ENCODE measurements at regions of chr19 and their contacts with region 1.

Region 1: GRCh38 chr19:42244347-42245220 is 2.2 kb upstream of the GSK3A start:
- DNase-seq: peak; percentile 95
- H3K4me3 Mint-ChIP-seq: peak overlapping the region; percentile 83
- H3K27ac Mint-ChIP-seq: peak overlapping the region; percentile 90
- H3K4me1 Mint-ChIP-seq: peaks cover 49% of the 10 kb centered on the region
- H3K27me3 Mint-ChIP-seq: no peaks in the 10 kb centered on the region

Region 2: GRCh38 chr19:42132851-42133528 is 111.6 kb before region 1 on chr19:
- CTCF ChIA-PET with region 1: interaction called, 39 read pairs
- POLR2A ChIA-PET with region 1: interaction called, 20 read pairs
- DNase-seq: peak; percentile 85
- H3K4me3 Mint-ChIP-seq: peak overlapping the region; percentile 82
- H3K27ac Mint-ChIP-seq: peak overlapping the region; percentile 81
- H3K4me1 Mint-ChIP-seq: peaks cover 64% of the 10 kb centered on the region
- H3K27me3 Mint-ChIP-seq: no peaks in the 10 kb centered on the region

Region 3: GRCh38 chr19:42191855-42192254 is 52.7 kb before region 1 on chr19:
- CTCF ChIA-PET with region 1: no interaction called
- POLR2A ChIA-PET with region 1: no interaction called
- DNase-seq: no peak
- H3K4me3 Mint-ChIP-seq: no peak overlapping the region
- H3K27ac Mint-ChIP-seq: peak overlapping the region; percentile 12
- H3K4me1 Mint-ChIP-seq: peaks cover 60% of the 10 kb centered on the region
- H3K27me3 Mint-ChIP-seq: no peaks in the 10 kb centered on the region

Region 4: GRCh38 chr19:42219812-42220750 is 24.5 kb before region 1 on chr19 and contains the start of gene ZNF526:
- CTCF ChIA-PET with region 1: interaction called, 17 read pairs
- POLR2A ChIA-PET with region 1: interaction called, 27 read pairs
- DNase-seq: peak; percentile 98
- H3K4me3 Mint-ChIP-seq: peak within 1 kb of the TSS; percentile 93
- H3K27ac Mint-ChIP-seq: peak within 1 kb of the TSS; percentile 88
- H3K4me1 Mint-ChIP-seq: peaks cover 63% of the 10 kb centered on the region
- H3K27me3 Mint-ChIP-seq: no peaks in the 10 kb centered on the region
- total RNA-seq, gene ZNF526: 21.5 to 21.7 TPM

Region 5: GRCh38 chr19:42254989-42255765 is 10.6 kb after region 1 on chr19 and contains the start of gene ERF:
- CTCF ChIA-PET with region 1: interaction called, 4 read pairs
- POLR2A ChIA-PET with region 1: interaction called, 10 read pairs
- DNase-seq: peak; percentile 93
- H3K4me3 Mint-ChIP-seq: peak within 1 kb of the TSS; percentile 72
- H3K27ac Mint-ChIP-seq: peak within 1 kb of the TSS; percentile 79
- H3K4me1 Mint-ChIP-seq: peaks cover 33% of the 10 kb centered on the region
- H3K27me3 Mint-ChIP-seq: peaks cover 11% of the 10 kb centered on the region
- total RNA-seq, gene ERF: 46.9 to 52.6 TPM

Region 6: GRCh38 chr19:42295831-42296525 is 51.4 kb after region 1 on chr19:
- CTCF ChIA-PET with region 1: interaction called, 14 read pairs
- POLR2A ChIA-PET with region 1: interaction called, 3 read pairs
- DNase-seq: peak; percentile 88
- H3K4me3 Mint-ChIP-seq: no peak overlapping the region
- H3K27ac Mint-ChIP-seq: peak overlapping the region; percentile 10
- H3K4me1 Mint-ChIP-seq: peaks cover 14% of the 10 kb centered on the region
- H3K27me3 Mint-ChIP-seq: no peaks in the 10 kb centered on the region

Region 7: GRCh38 chr19:42440357-42441048 is 195.9 kb after region 1 on chr19:
- CTCF ChIA-PET with region 1: no interaction called
- POLR2A ChIA-PET with region 1: no interaction called
- DNase-seq: peak; percentile 84
- H3K4me3 Mint-ChIP-seq: no peak overlapping the region
- H3K27ac Mint-ChIP-seq: peak overlapping the region; percentile 25
- H3K4me1 Mint-ChIP-seq: peaks cover 29% of the 10 kb centered on the region
- H3K27me3 Mint-ChIP-seq: peaks cover 5% of the 10 kb centered on the region